Activated B cell treated with CpG ODN at 0.5 μM for 24 hours (primary cell): ENCODE measurements at regions of chr11 and their contacts with region 1.

Region 1: GRCh38 chr11:34234086-34234740 is 123.6 kb downstream of the ABTB2 start:
- DNase-seq: peak; percentile 67
- ATAC-seq: peak; percentile 75
- H3K4me3 Mint-ChIP-seq: peak overlapping the region; percentile 73
- H3K27ac Mint-ChIP-seq: peak overlapping the region; percentile 97
- H3K4me1 Mint-ChIP-seq: peaks cover 76% of the 10 kb centered on the region
- H3K27me3 Mint-ChIP-seq: no peaks in the 10 kb centered on the region
- CTCF ChIP-seq: no peak

Region 2: GRCh38 chr11:33257897-33258630 is 976.1 kb before region 1 on chr11:
- CTCF ChIA-PET with region 1: no interaction called
- POLR2A ChIA-PET with region 1: no interaction called
- intact Hi-C with region 1: loop called (anchors 5 kb)
- DNase-seq: peak; percentile 64
- ATAC-seq: peak; percentile 37
- H3K4me3 Mint-ChIP-seq: peak overlapping the region; percentile 97
- H3K27ac Mint-ChIP-seq: peak overlapping the region; percentile 98
- H3K4me1 Mint-ChIP-seq: peaks cover 46% of the 10 kb centered on the region
- H3K27me3 Mint-ChIP-seq: no peaks in the 10 kb centered on the region
- CTCF ChIP-seq: no peak

Region 3: DNA sequence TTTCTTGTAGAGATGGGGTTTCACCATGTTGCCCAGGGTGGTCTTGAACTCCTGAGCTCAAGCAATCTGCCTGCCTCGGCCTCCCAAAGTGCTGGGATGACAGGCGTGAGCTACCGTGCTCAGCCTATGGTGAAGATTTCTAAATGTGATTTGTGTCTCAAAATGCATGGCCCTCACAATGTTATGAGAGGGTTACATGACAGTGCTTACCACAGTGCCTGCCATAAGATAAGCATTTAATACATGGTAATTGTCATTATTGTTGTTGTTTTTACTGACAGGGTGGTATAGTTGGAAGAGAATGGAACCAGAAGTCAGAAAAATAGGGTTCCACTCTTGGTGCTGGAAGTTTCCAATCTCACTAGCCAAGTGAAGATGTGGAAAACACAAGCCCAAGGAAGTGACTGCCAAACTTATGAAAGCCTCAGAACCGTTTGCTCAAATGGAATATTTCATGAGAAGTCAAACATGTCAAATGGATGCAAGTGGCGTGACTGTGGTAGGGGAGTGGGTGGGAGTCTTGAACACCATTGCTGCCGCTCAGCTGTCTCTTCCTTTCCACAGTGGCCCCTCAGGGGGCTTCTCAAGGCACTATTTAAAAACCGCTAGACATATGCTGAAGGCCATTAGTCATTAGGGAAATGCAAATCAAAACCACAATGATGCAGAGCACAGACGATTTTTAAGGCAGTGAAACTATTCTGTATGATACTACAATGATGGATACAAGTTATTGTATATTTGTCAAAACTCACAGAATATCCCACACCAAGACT is 313.2 kb before region 1 on chr11:
- CTCF ChIA-PET with region 1: no interaction called
- POLR2A ChIA-PET with region 1: no interaction called
- intact Hi-C with region 1: loop called (anchors 2 kb)
- DNase-seq: peak; percentile 44
- ATAC-seq: peak; percentile 97
- H3K4me3 Mint-ChIP-seq: peak overlapping the region; percentile 47
- H3K27ac Mint-ChIP-seq: peak overlapping the region; percentile 70
- H3K4me1 Mint-ChIP-seq: peaks cover 26% of the 10 kb centered on the region
- H3K27me3 Mint-ChIP-seq: peaks cover 28% of the 10 kb centered on the region
- CTCF ChIP-seq: no peak

Region 4: GRCh38 chr11:34174412-34175041 is 59.7 kb before region 1 on chr11:
- CTCF ChIA-PET with region 1: interaction called, 23 read pairs
- POLR2A ChIA-PET with region 1: interaction called, 36 read pairs
- intact Hi-C with region 1: loop called (anchors 1 kb)
- DNase-seq: peak; percentile 75
- ATAC-seq: peak; percentile 99
- H3K4me3 Mint-ChIP-seq: peak overlapping the region; percentile 63
- H3K27ac Mint-ChIP-seq: no peak overlapping the region
- H3K4me1 Mint-ChIP-seq: peaks cover 36% of the 10 kb centered on the region
- H3K27me3 Mint-ChIP-seq: no peaks in the 10 kb centered on the region
- CTCF ChIP-seq: no peak

Region 5: DNA sequence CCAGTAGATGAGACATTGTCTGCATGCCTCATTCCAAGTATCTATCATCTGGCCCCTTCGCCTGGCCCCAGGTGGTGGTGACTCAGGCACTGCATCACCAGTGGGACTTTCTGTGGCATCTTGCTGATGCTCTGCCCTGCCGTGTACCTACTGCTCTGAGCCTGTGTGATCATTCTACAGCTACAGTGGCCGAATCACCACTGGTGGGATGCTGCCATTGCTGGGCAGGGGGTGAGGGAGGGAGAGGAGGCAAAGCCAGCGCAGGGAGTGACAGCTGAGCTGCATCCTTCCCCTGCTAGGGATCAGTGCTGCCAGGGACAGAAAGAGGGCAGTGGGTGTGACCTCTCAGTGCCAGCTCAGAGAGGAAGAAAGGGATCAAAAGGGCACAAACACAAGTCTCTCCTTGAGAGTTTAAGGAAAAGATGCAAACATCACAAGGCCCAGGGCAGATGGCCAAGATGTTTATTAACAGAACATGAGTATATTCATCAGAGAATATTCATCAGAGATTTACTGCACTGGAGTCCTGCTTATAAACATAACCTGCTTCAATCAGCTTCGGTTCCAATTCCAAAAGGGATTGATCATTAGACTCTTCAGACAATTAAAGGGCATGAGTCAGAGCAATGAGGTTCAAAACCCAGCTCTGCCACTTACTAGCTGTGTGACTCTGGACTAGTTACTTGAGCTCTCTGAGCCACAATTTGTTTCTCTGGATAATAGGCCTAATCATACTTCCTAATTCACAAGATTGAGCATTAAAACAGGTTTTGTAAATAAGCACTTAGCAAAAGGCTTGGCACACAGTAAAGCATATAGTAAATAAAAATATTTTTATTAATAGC is 19.0 kb before region 1 on chr11:
- CTCF ChIA-PET with region 1: no interaction called
- POLR2A ChIA-PET with region 1: interaction called, 23 read pairs
- intact Hi-C with region 1: loop called (anchors 1 kb)
- DNase-seq: peak; percentile 30
- ATAC-seq: peak; percentile 95
- H3K4me3 Mint-ChIP-seq: peak overlapping the region; percentile 49
- H3K27ac Mint-ChIP-seq: peak overlapping the region; percentile 81
- H3K4me1 Mint-ChIP-seq: peaks cover 32% of the 10 kb centered on the region
- H3K27me3 Mint-ChIP-seq: no peaks in the 10 kb centered on the region
- CTCF ChIP-seq: no peak

Region 6: GRCh38 chr11:35126000-35126878 is 892.0 kb after region 1 on chr11:
- CTCF ChIA-PET with region 1: no interaction called
- POLR2A ChIA-PET with region 1: no interaction called
- intact Hi-C with region 1: loop called (anchors 5 kb)
- DNase-seq: peak; percentile 49
- ATAC-seq: peak; percentile 71
- H3K4me3 Mint-ChIP-seq: peak overlapping the region; percentile 76
- H3K27ac Mint-ChIP-seq: peak overlapping the region; percentile 97
- H3K4me1 Mint-ChIP-seq: peaks cover 85% of the 10 kb centered on the region
- H3K27me3 Mint-ChIP-seq: no peaks in the 10 kb centered on the region
- CTCF ChIP-seq: no peak